Thyroid gland (tissue), 4 donors: ENCODE measurements at regions of chr6 and their contacts with region 1.

Region 1: GRCh38 chr6:144582939-144583613 is 297.9 kb downstream of the UTRN start:
- DNase-seq: peak; percentile 9 to 19
- H3K4me3 ChIP-seq: no peak overlapping the region
- H3K27ac ChIP-seq: no peak overlapping the region
- H3K4me1 ChIP-seq: peaks cover 5 to 9% of the 10 kb centered on the region in 2 donors
- H3K27me3 ChIP-seq: no peaks in the 10 kb centered on the region
- CTCF ChIP-seq: no peak
- POLR2A ChIP-seq: no peak

Region 2: DNA sequence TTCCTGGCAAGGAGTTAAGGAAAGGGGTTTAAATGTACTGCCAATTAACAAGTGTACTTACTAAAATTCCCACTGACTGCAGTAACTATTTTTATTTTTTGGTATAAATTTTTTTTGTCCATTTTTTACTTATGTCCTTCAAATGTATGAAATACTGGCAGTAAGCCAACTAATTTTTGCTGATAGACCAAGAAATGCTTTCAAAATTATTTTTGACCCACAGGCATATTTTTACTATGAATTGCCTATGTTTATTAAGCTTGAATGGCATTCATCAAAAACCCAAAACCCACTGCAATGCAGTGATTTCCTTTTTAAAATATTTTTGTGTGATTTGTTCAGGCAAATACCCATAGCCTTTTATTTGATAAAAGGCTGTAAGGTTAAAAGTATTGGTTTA is 262.1 kb after region 1 on chr6:
- intact Hi-C with region 1: no loop called
- DNase-seq: no peak
- H3K4me3 ChIP-seq: no peak overlapping the region
- H3K27ac ChIP-seq: no peak overlapping the region
- H3K4me1 ChIP-seq: peaks cover 0 to 4% of the 10 kb centered on the region in 2 donors
- H3K27me3 ChIP-seq: no peaks in the 10 kb centered on the region
- CTCF ChIP-seq: no peak
- POLR2A ChIP-seq: no peak

Region 3: DNA sequence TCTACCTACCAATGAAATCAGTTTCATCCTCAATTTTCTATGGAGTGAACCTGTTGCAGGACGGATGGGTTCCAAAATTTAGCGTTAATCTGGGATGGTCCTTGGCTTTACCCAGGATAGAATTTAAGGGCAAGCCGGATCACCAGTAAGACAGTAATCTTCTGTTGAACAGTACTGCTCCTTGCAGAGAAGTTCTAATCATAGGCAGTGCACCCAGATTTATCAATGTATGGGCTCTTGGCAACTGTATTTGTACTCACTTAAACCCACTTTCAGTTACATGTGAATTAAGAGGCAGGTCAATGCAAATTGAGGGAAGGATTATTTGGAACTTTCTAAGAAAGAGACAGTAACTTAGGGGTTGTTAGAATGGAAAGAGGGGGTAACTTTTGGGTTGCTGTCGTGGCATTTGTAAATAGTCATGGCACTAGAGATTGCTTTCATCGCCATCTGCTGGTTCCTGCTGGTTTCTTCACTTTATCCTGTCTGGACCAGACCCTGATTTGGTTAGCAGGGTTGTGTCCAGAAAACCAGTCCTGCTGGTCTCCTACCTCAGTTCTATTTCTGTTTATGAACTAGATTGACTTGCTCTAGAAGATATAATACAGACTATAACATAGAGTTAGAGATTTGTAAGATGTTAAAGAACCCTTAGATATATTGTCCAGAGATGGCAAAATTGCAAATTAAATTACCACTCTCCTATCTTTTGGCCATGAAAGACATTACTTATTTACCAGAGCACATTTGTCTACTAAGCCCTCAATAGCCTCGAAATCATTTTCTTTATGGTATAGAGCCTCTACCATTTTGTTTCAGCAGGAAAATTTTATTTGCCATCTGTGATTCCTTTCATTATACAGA is 348.3 kb after region 1 on chr6:
- intact Hi-C with region 1: loop called (anchors 10 kb)
- DNase-seq: peak; percentile 52 to 64
- H3K4me3 ChIP-seq: no peak overlapping the region
- H3K27ac ChIP-seq: no peak overlapping the region
- H3K4me1 ChIP-seq: no peaks in the 10 kb centered on the region
- H3K27me3 ChIP-seq: no peaks in the 10 kb centered on the region
- CTCF ChIP-seq: peak in 5 of 6 experiments; percentile 24 to 72 (median 58)
- POLR2A ChIP-seq: no peak